Activated naive CD4-positive, alpha-beta T cell treated with anti-CD3 and anti-CD28 coated beads, Interleukin-2, amount 10 ng/mL, durations not matched to agents 7 days and 5 days (primary cell): ENCODE measurements at regions of chr1 and their contacts with region 1.

Region 1: GRCh38 chr1:160675641-160676410 is 29.0 kb upstream of the SLAMF1 start:
- DNase-seq: peak; percentile 85
- H3K4me3 Mint-ChIP-seq: no peak overlapping the region
- H3K27ac Mint-ChIP-seq: peak overlapping the region; percentile 79
- H3K4me1 Mint-ChIP-seq: peaks cover 28% of the 10 kb centered on the region
- H3K27me3 Mint-ChIP-seq: no peaks in the 10 kb centered on the region

Region 2: GRCh38 chr1:160629286-160630210 is 46.3 kb before region 1 on chr1:
- CTCF ChIA-PET with region 1: interaction called, 14 read pairs
- DNase-seq: peak; percentile 91
- H3K4me3 Mint-ChIP-seq: peak overlapping the region; percentile 64
- H3K27ac Mint-ChIP-seq: peak overlapping the region; percentile 97
- H3K4me1 Mint-ChIP-seq: peaks cover 97% of the 10 kb centered on the region
- H3K27me3 Mint-ChIP-seq: no peaks in the 10 kb centered on the region

Region 3: GRCh38 chr1:160646711-160647328 is 29.0 kb before region 1 on chr1 and contains the start of gene SLAMF1:
- CTCF ChIA-PET with region 1: interaction called, 40 read pairs
- DNase-seq: peak; percentile 48
- H3K4me3 Mint-ChIP-seq: peak within 1 kb of the TSS; percentile 89
- H3K27ac Mint-ChIP-seq: peak within 1 kb of the TSS; percentile 92
- H3K4me1 Mint-ChIP-seq: peaks cover 68% of the 10 kb centered on the region
- H3K27me3 Mint-ChIP-seq: no peaks in the 10 kb centered on the region

Region 4: DNA sequence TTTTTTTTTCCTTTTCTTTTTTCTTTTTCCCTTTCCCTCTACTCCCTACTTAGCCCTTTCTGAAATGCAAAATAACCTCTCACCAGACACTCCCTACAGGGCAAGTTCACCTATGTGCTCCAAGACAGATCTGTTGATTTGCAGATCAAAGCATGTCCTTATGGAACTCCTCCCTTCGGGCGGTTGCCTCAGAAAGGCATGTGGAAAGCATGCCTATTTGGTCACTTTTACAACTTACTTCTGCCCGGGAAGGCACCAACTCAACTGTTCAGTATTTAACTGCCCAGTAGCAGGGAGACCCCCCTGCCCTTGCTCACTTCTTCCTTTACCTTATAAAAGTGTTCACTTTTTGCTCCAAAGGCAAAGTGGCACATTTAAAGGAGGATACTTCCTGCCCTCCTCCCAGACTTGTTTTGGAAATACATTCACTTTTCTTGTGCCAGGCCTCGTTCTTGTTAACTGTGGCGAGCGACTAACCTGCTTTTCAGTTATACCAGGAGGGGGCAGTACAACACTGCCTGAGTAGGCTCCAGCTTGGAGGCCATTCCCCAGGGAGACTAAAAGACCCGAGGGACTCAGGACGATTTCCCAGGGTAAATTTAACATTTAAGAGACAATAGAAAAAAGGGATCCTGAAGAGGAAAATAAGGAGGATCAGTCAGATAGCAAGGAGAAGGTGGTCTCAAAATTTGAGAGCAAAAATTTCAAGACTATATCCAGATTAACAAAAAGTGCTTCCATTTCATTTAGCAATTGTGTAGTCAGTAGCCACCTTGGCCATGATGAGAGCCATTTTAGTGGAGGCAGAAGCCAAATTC is 50.9 kb after region 1 on chr1:
- CTCF ChIA-PET with region 1: interaction called, 107 read pairs
- DNase-seq: peak; percentile 75
- H3K4me3 Mint-ChIP-seq: no peak overlapping the region
- H3K27ac Mint-ChIP-seq: no peak overlapping the region
- H3K4me1 Mint-ChIP-seq: peaks cover 22% of the 10 kb centered on the region
- H3K27me3 Mint-ChIP-seq: no peaks in the 10 kb centered on the region

Region 5: DNA sequence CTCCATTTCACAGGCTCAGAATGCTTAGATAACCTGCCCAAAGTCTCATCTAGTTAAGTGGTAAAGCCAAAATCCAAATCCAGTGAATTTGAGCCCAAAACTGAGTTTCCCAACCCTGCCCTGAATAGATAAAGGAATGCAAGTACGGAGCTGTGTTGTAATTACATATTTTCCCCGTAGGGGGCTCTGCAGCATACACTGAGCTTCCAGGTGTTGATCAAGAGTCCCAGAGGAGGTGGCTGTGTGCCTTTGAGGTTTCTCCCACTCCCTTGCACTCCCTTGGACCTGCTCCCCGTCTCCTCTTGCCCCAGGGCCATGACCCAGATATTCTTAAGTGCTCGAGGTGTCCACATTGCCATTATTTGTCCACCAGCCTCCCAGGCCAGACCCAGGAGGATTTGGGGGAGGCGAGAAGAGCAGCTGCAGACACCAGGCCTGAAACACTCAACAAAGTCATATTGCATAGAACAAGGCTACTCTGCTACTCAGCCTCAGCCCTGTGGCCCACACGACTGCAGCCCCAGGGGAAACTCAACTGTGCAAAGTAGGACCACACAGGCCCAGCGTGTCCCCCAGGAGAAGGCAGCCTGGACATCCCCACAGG is 101.8 kb after region 1 on chr1:
- CTCF ChIA-PET with region 1: interaction called, 104 read pairs
- DNase-seq: peak; percentile 64
- H3K4me3 Mint-ChIP-seq: no peak overlapping the region
- H3K27ac Mint-ChIP-seq: peak overlapping the region; percentile 5
- H3K4me1 Mint-ChIP-seq: peaks cover 41% of the 10 kb centered on the region
- H3K27me3 Mint-ChIP-seq: no peaks in the 10 kb centered on the region